GM12878 (cell line): ENCODE measurements at regions of chr16 and their contacts with region 1.

Region 1: DNA sequence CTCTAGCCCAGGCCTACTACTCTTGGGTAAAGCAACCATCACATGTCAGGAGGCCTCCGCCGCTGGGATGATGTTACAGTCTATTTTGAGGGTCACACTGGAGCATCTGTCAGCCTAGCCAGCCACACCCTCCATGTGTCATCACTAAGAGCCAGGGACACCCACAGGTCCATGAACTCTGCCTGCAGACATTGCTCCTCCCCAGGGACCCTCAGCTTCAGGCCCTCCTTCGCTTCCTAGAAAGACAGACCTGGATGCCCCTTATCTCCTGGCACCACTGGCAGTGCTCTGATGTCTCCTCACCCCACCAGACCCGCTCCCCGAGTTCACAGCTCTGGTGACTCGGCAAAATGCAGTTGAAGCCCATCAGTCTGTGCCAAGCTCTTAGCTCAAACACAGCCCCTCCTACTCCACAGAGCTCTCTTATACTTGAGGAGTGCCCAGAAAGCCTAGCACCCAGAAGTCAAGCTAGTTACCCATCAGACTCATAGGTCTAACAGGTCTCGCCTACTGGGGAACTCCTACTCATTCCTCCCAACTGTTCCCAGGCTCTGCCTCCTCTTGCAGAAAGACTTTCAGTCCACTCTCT is 5.9 kb downstream of the RANBP10 start:
- DNase-seq: no peak
- ATAC-seq: no peak
- H3K4me3 ChIP-seq: no peak overlapping the region
- H3K27ac ChIP-seq: no peak overlapping the region
- H3K4me1 ChIP-seq: peaks cover 26% of the 10 kb centered on the region
- H3K27me3 ChIP-seq: no peaks in the 10 kb centered on the region
- CTCF ChIP-seq: no peak
- EP300 ChIP-seq: no peak
- POLR2A ChIP-seq: no peak
- RAD21 ChIP-seq: no peak

Region 2: DNA sequence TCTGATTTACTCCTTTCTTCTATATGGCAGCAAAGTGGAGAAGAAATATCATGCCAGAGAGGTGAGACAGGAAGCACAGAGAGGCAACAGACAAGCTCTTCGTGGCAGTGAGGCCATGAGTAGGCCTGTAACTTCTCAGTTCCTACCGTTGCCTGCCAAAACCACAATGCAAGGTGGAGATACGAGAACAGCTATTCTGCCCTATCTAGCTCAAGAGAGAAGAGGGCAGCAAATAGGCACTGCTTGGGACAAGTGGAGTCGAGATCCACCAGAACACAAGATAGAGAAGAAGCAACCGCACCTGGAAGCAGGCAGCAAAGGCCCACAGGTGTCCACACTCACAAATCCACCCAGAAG is 18.9 kb before region 1 on chr16:
- CTCF ChIA-PET with region 1: interaction called, 22 read pairs
- POLR2A ChIA-PET with region 1: interaction called, 17 read pairs
- RAD21 ChIA-PET with region 1: interaction called, 6 read pairs
- SMC1A ChIA-PET with region 1: interaction called, 8 read pairs
- in situ Hi-C with region 1: no loop called
- intact Hi-C with region 1: no loop called
- DNase-seq: no peak
- ATAC-seq: peak; percentile 75
- H3K4me3 ChIP-seq: no peak overlapping the region
- H3K27ac ChIP-seq: peak overlapping the region; percentile 14; the same call in 1 of the 2 replicates
- H3K4me1 ChIP-seq: peaks cover 33% of the 10 kb centered on the region
- H3K27me3 ChIP-seq: no peaks in the 10 kb centered on the region
- CTCF ChIP-seq: no peak
- EP300 ChIP-seq: no peak
- POLR2A ChIP-seq: no peak
- RAD21 ChIP-seq: no peak

Region 3: DNA sequence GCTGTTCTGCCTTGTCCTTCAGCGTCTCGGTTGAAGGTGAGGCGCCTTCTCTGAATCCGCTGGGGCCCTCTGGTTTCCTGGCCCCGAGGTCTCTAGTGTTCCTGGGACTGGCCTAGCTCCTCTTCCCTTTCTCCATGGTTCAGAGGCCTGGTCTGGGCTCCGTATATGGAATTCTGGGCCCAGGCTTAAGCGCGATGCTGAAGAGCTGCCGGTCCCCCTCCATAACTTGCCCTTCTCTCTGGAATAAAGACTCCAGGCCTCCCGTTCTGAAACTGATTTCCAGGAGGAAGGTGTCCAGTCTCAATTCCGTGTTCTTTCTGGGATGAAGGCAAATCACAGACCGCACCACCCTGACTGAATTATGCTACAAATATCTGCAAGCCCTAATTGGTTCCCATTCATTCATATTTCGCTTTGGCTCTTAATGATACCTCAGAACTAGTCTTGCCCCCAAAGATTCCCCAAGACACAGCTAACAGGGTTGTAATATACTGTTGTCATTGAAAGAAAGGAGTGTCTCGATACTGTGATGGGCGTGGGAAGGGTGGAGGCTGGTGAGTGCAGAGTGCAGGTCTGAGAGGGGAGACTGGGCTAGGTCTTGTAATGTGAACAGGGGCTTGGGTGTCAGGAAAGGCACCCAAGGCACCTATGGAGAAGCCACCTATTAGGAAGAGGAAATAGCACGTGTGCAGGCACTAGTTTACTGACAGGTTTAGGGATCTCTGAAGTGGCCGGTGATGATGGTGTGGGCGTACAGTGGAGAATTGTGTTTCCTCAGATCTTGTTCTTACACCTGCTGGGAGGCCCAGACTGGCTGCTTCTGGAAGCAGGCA is 73.3 kb after region 1 on chr16:
- CTCF ChIA-PET with region 1: no interaction called
- POLR2A ChIA-PET with region 1: no interaction called
- RAD21 ChIA-PET with region 1: no interaction called
- SMC1A ChIA-PET with region 1: no interaction called
- in situ Hi-C with region 1: no loop called
- intact Hi-C with region 1: no loop called
- DNase-seq: no peak
- ATAC-seq: peak; percentile 5; the same call in 2 of the 3 replicates
- H3K4me3 ChIP-seq: peak overlapping the region; percentile 92
- H3K27ac ChIP-seq: peak overlapping the region; percentile 78
- H3K4me1 ChIP-seq: peaks cover 10% of the 10 kb centered on the region
- H3K27me3 ChIP-seq: no peaks in the 10 kb centered on the region
- CTCF ChIP-seq: no peak
- EP300 ChIP-seq: no peak
- POLR2A ChIP-seq: no peak
- RAD21 ChIP-seq: no peak

Region 4: DNA sequence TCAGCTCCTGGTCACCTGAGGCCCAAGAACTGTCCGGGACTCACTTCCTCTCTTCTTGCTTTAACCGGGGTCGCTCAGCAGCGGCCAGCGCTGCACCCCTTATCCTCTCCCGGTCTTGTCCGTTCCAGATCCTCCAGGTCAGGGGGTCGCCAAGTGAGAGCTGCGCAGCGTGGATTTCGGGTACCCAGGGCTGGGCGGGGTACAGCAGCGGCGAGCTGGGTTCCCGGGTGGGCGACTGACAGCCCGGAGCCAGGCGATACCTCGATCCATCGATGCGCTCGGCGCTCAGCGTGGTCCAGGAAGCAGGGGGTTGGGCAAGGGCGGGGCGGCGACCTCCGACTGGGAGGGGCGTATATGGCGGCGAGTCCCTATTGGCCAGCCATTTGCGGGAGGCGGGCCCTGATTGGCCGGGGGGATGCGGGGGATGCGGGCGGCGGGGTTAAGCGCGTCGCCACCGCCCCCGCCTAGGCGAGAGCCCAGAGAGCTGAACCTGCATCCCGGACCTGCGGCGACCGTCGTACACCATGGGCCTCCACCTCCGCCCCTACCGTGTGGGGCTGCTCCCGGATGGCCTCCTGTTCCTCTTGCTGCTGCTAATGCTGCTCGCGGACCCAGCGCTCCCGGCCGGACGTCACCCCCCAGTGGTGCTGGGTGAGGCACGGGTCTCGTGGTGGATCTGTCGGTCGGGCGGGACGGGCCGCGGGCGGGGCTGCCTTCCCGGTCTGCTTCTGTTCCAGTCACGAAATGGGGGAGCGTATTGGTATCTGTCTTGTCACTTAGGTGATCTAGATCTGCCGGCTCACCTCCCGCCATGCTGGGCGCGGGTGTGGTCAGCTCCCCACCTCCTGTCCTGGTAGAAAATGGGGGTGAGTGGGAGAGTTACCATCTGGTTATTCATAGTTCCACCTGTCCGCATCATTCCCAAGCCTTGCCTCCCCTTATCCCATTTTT is 444.7 kb after region 1 on chr16 and contains the start of gene PLA2G15:
- CTCF ChIA-PET with region 1: no interaction called
- POLR2A ChIA-PET with region 1: no interaction called
- RAD21 ChIA-PET with region 1: no interaction called
- SMC1A ChIA-PET with region 1: no interaction called
- in situ Hi-C with region 1: no loop called
- intact Hi-C with region 1: no loop called
- DNase-seq: no peak
- ATAC-seq: peak; percentile 98
- H3K4me3 ChIP-seq: peak within 1 kb of the TSS; percentile 97
- H3K27ac ChIP-seq: peak within 1 kb of the TSS; percentile 5; the same call in 1 of the 2 replicates
- H3K4me1 ChIP-seq: peaks cover 18% of the 10 kb centered on the region
- H3K27me3 ChIP-seq: no peaks in the 10 kb centered on the region
- CTCF ChIP-seq: no peak
- EP300 ChIP-seq: 0 out of 4 replicates have a peak, but pooled peaks of 1 of the 2 experiments have one; percentile 22
- POLR2A ChIP-seq: peak; percentile 87
- RAD21 ChIP-seq: no peak
- polyA plus RNA-seq, gene PLA2G15: 0.31 to 1.1 TPM